CD8-positive, alpha-beta memory T cell (primary cell): ENCODE measurements at regions of chr6 and their contacts with region 1.

Region 1: GRCh38 chr6:26196846-26197648 is 109.8 kb downstream of the HFE start:
- DNase-seq: peak; percentile 66 to 93 (median 90)
- H3K4me3 ChIP-seq: peak overlapping the region; percentile 84
- H3K4me3 Mint-ChIP-seq: peak overlapping the region; percentile 95 to 99 (median 96)
- H3K27ac ChIP-seq: peak overlapping the region; percentile 95
- H3K27ac Mint-ChIP-seq: peak overlapping the region; percentile 95 to 100 (median 98)
- H3K4me1 ChIP-seq: peaks cover 17% of the 10 kb centered on the region
- H3K4me1 Mint-ChIP-seq: peaks cover 33 to 63% (median 59%) of the 10 kb centered on the region in 3 donors
- H3K27me3 ChIP-seq: no peaks in the 10 kb centered on the region
- H3K27me3 Mint-ChIP-seq: peaks cover 0 to 4% of the 10 kb centered on the region in 2 donors

Region 2: DNA sequence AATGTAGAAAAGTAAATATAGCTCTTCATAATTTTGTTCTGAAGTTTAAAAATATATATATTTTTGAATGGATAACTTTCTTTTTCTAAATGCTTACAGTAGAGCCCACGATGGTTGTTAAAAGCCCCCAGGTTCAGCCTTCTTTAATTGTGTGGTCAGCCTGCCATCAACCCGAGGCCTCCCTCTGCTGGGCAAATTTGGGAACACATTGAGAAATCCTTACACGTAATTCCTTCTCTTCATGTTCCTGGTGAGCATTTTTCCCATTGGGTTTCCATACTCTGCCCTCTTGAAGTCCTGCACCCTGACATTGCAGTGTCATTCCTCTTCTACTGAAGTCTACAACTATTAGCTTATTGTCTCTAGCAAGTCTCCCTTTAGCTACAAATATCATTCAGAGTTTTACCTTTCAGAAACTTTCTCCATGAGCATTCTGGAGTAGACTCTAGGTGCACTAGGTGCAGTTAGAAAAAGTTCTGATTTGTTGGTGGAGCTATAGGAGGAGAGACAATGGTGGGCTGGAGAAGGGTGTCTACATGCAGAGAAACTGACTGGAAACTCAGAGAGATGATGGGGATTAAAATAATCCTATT is 193.8 kb before region 1 on chr6:
- CTCF ChIA-PET with region 1: no interaction called
- POLR2A ChIA-PET with region 1: no interaction called
- DNase-seq: peak; percentile 17 to 65 (median 28)
- H3K4me3 ChIP-seq: no peak overlapping the region
- H3K4me3 Mint-ChIP-seq: no peak overlapping the region
- H3K27ac ChIP-seq: no peak overlapping the region
- H3K27ac Mint-ChIP-seq: no peak overlapping the region
- H3K4me1 ChIP-seq: no peaks in the 10 kb centered on the region
- H3K4me1 Mint-ChIP-seq: peaks cover 0 to 8% (median 0%) of the 10 kb centered on the region in 3 donors
- H3K27me3 ChIP-seq: no peaks in the 10 kb centered on the region
- H3K27me3 Mint-ChIP-seq: no peaks in the 10 kb centered on the region

Region 3: DNA sequence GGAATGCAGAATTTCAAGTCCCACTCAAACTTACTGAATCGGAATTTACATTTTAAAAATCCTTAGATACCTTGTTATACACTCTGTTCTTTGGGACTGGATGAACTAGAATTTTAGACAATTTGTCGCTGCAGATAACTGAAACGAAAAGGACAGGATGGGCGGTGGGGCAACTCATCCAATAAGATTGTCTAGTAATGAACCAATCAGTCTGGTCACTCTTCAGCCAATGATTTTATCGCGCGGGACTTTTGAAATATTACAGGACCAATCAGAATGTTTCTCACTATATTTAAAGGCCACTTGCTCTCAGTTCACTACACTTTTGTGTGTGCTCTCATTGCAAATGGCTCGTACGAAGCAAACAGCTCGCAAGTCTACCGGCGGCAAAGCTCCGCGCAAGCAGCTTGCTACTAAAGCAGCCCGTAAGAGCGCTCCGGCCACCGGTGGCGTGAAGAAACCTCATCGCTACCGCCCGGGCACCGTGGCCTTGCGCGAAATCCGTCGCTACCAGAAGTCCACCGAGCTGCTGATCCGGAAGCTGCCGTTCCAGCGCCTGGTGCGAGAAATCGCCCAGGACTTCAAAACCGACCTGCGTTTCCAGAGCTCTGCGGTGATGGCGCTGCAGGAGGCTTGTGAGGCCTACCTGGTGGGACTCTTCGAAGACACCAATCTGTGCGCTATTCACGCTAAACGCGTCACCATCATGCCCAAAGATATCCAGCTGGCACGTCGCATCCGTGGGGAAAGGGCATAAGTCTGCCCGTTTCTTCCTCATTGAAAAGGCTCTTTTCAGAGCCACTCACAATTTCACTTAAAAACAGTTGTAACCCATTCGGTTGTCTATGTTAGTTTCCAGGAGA is 151.8 kb before region 1 on chr6:
- CTCF ChIA-PET with region 1: interaction called, 5 read pairs
- POLR2A ChIA-PET with region 1: interaction called, 34 read pairs
- DNase-seq: peak; percentile 58 to 90 (median 85)
- H3K4me3 ChIP-seq: peak overlapping the region; percentile 77
- H3K4me3 Mint-ChIP-seq: peak overlapping the region; percentile 87 to 94 (median 92)
- H3K27ac ChIP-seq: peak overlapping the region; percentile 71
- H3K27ac Mint-ChIP-seq: peak overlapping the region; percentile 94 to 99 (median 98)
- H3K4me1 ChIP-seq: peaks cover 10% of the 10 kb centered on the region
- H3K4me1 Mint-ChIP-seq: peaks cover 20 to 32% (median 30%) of the 10 kb centered on the region in 3 donors
- H3K27me3 ChIP-seq: no peaks in the 10 kb centered on the region
- H3K27me3 Mint-ChIP-seq: no peaks in the 10 kb centered on the region

Region 4: GRCh38 chr6:26183581-26184366 is 13.3 kb before region 1 on chr6:
- CTCF ChIA-PET with region 1: interaction called, 67 read pairs
- POLR2A ChIA-PET with region 1: interaction called, 201 read pairs
- DNase-seq: peak; percentile 31 to 78 (median 72)
- H3K4me3 ChIP-seq: peak overlapping the region; percentile 81
- H3K4me3 Mint-ChIP-seq: peak overlapping the region; percentile 86 to 99 (median 97)
- H3K27ac ChIP-seq: peak overlapping the region; percentile 71
- H3K27ac Mint-ChIP-seq: peak overlapping the region; percentile 71 to 99 (median 96)
- H3K4me1 ChIP-seq: peaks cover 33% of the 10 kb centered on the region
- H3K4me1 Mint-ChIP-seq: peaks cover 41 to 53% (median 44%) of the 10 kb centered on the region in 3 donors
- H3K27me3 ChIP-seq: no peaks in the 10 kb centered on the region
- H3K27me3 Mint-ChIP-seq: no peaks in the 10 kb centered on the region

Region 5: DNA sequence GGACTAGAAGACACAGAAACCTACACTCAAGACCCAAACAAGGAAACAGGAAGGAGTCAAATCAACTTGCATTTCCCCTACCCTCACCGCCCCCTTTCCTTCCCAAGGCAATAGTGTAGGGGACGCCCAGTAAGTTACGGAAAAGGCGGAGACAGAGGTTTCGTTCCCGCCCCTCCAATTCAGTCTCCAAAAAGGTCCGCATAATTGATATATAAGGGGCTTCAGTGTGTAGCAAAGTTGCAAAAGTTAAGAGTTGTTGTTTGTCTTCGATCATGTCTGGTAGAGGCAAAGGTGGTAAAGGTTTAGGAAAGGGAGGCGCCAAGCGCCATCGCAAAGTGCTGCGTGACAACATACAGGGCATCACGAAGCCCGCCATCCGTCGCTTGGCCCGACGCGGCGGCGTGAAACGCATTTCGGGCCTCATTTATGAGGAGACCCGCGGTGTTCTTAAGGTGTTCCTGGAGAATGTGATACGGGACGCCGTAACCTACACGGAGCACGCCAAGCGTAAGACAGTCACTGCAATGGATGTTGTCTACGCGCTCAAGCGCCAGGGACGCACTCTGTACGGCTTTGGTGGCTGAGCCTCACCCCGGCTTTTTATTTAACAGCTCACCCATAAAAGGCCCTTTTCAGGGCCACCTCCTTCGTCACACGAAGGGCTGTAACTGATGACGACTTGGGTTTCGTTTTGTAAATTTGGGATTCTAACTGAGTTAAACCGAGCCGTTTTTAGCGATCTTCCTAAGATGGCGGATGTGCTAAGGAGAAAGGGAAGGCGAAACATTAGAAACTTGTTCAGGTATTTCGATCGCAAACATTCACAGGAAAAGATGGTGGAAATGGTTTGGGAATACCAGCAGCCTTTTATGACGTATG is 43.3 kb after region 1 on chr6:
- CTCF ChIA-PET with region 1: interaction called, 51 read pairs
- POLR2A ChIA-PET with region 1: interaction called, 192 read pairs
- DNase-seq: peak; percentile 44 to 82 (median 81)
- H3K4me3 ChIP-seq: peak overlapping the region; percentile 63
- H3K4me3 Mint-ChIP-seq: peak overlapping the region; percentile 82 to 93 (median 85)
- H3K27ac ChIP-seq: peak overlapping the region; percentile 85
- H3K27ac Mint-ChIP-seq: peak overlapping the region; percentile 94 to 99 (median 96)
- H3K4me1 ChIP-seq: peaks cover 13% of the 10 kb centered on the region
- H3K4me1 Mint-ChIP-seq: peaks cover 19 to 31% (median 31%) of the 10 kb centered on the region in 3 donors
- H3K27me3 ChIP-seq: no peaks in the 10 kb centered on the region
- H3K27me3 Mint-ChIP-seq: no peaks in the 10 kb centered on the region

Region 6: GRCh38 chr6:26366504-26366903 is 169.5 kb after region 1 on chr6:
- CTCF ChIA-PET with region 1: no interaction called
- POLR2A ChIA-PET with region 1: interaction called, 11 read pairs
- DNase-seq: no peak
- H3K4me3 ChIP-seq: peak overlapping the region; percentile 89
- H3K4me3 Mint-ChIP-seq: no peak overlapping the region
- H3K27ac ChIP-seq: peak overlapping the region; percentile 95
- H3K27ac Mint-ChIP-seq: peak overlapping the region in 5 of 8 donors; percentile 31 to 96 (median 86)
- H3K4me1 ChIP-seq: peaks cover 54% of the 10 kb centered on the region
- H3K4me1 Mint-ChIP-seq: peaks cover 58 to 67% (median 59%) of the 10 kb centered on the region in 3 donors
- H3K27me3 ChIP-seq: no peaks in the 10 kb centered on the region
- H3K27me3 Mint-ChIP-seq: no peaks in the 10 kb centered on the region

Region 7: GRCh38 chr6:27893059-27893835 is 1696.2 kb after region 1 on chr6:
- CTCF ChIA-PET with region 1: no interaction called
- POLR2A ChIA-PET with region 1: interaction called, 21 read pairs
- DNase-seq: peak; percentile 75 to 95 (median 91)
- H3K4me3 ChIP-seq: peak overlapping the region; percentile 82
- H3K4me3 Mint-ChIP-seq: no peak overlapping the region
- H3K27ac ChIP-seq: peak overlapping the region; percentile 79
- H3K27ac Mint-ChIP-seq: peak overlapping the region in 3 of 8 donors; percentile 94 to 97 (median 97)
- H3K4me1 ChIP-seq: peaks cover 19% of the 10 kb centered on the region
- H3K4me1 Mint-ChIP-seq: peaks cover 29 to 44% (median 40%) of the 10 kb centered on the region in 3 donors
- H3K27me3 ChIP-seq: no peaks in the 10 kb centered on the region
- H3K27me3 Mint-ChIP-seq: peaks cover 0 to 2% of the 10 kb centered on the region in 2 donors